GM12878 (cell line): ENCODE measurements at regions of chr2 and their contacts with region 1.

Region 1: GRCh38 chr2:25276569-25277465 is 64.9 kb downstream of the DNMT3A start:
- DNase-seq: no peak
- ATAC-seq: peak; percentile 41
- H3K4me3 ChIP-seq: peak overlapping the region; percentile 45; the same call in 1 of the 2 replicates
- H3K27ac ChIP-seq: peak overlapping the region; percentile 77
- H3K4me1 ChIP-seq: peaks cover 86% of the 10 kb centered on the region
- H3K27me3 ChIP-seq: no peaks in the 10 kb centered on the region
- CTCF ChIP-seq: peak; percentile 75 to 89 (median 80)
- EP300 ChIP-seq: 0 out of 4 replicates have a peak, but pooled peaks of 1 of the 2 experiments have one; percentile 34
- POLR2A ChIP-seq: peak; percentile 54; the same call in 1 of the 2 replicates
- RAD21 ChIP-seq: peak; percentile 58; the same call in 1 of the 2 replicates

Region 2: DNA sequence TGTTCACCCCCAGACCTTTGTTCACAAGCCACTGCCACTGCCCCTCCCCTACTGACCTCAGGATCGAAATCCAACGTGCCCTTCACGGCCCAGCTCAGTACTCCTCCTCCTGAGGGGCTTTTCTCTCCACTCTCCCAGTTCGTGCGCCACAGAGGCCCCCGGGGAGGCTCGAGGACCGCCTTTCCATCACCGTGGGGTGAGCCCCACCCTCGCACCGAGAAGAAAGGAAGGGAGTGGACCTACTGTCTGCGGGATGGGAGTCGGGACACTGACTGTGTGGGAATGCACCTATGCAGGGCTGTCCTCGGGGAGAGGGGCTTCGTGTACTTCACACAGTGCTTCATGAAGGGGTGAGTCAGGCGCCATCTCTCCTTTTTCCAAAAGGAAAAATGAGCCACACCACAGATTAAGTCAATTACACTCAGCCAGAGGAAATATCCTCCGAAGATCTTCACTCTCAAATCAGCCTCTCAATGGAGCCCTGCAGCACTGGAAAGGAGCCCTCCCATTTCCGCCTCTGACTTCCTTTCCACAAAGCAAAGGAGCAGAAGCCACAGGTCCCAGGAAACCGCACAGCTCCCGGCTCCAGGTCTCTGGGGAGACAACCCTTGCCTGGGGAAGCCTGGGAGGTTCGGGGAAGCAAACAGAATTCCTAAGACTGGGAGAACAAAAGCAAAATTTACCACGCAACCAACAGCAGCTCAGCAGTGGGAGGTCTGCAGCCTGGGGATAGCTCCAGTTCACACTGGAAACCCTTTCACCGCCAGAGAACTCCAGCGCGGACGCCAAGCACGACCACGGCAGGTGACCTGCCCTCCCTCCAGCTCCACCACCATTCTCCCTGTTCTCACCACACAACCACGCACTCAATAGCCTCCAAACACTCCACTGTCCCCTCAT is 378.4 kb before region 1 on chr2:
- CTCF ChIA-PET with region 1: no interaction called
- POLR2A ChIA-PET with region 1: no interaction called
- RAD21 ChIA-PET with region 1: no interaction called
- SMC1A ChIA-PET with region 1: no interaction called
- in situ Hi-C with region 1: no loop called
- intact Hi-C with region 1: no loop called
- DNase-seq: no peak
- ATAC-seq: no peak
- H3K4me3 ChIP-seq: no peak overlapping the region
- H3K27ac ChIP-seq: no peak overlapping the region
- H3K4me1 ChIP-seq: no peaks in the 10 kb centered on the region
- H3K27me3 ChIP-seq: no peaks in the 10 kb centered on the region
- CTCF ChIP-seq: no peak
- EP300 ChIP-seq: no peak
- POLR2A ChIP-seq: no peak
- RAD21 ChIP-seq: no peak

Region 3: GRCh38 chr2:25151718-25152117 is 125.1 kb before region 1 on chr2:
- CTCF ChIA-PET with region 1: no interaction called
- POLR2A ChIA-PET with region 1: no interaction called
- RAD21 ChIA-PET with region 1: no interaction called
- SMC1A ChIA-PET with region 1: no interaction called
- in situ Hi-C with region 1: no loop called
- intact Hi-C with region 1: no loop called
- DNase-seq: no peak
- ATAC-seq: no peak
- H3K4me3 ChIP-seq: no peak overlapping the region
- H3K27ac ChIP-seq: no peak overlapping the region
- H3K4me1 ChIP-seq: no peaks in the 10 kb centered on the region
- H3K27me3 ChIP-seq: no peaks in the 10 kb centered on the region; a peak in 2 of 4 replicates
- CTCF ChIP-seq: no peak
- EP300 ChIP-seq: no peak
- POLR2A ChIP-seq: no peak
- RAD21 ChIP-seq: no peak

Region 4: GRCh38 chr2:25228848-25229278 is 48.0 kb before region 1 on chr2:
- CTCF ChIA-PET with region 1: interaction called, 14 read pairs
- POLR2A ChIA-PET with region 1: interaction called, 3 read pairs
- RAD21 ChIA-PET with region 1: interaction called, 5 read pairs
- SMC1A ChIA-PET with region 1: interaction called, 5 read pairs
- in situ Hi-C with region 1: no loop called
- intact Hi-C with region 1: no loop called
- DNase-seq: no peak
- ATAC-seq: peak; percentile 64
- H3K4me3 ChIP-seq: no peak overlapping the region
- H3K27ac ChIP-seq: no peak overlapping the region
- H3K4me1 ChIP-seq: peaks cover 29% of the 10 kb centered on the region
- H3K27me3 ChIP-seq: no peaks in the 10 kb centered on the region
- CTCF ChIP-seq: peak; percentile 60 to 82 (median 63)
- EP300 ChIP-seq: no peak
- POLR2A ChIP-seq: no peak
- RAD21 ChIP-seq: peak; percentile 55

Region 5: DNA sequence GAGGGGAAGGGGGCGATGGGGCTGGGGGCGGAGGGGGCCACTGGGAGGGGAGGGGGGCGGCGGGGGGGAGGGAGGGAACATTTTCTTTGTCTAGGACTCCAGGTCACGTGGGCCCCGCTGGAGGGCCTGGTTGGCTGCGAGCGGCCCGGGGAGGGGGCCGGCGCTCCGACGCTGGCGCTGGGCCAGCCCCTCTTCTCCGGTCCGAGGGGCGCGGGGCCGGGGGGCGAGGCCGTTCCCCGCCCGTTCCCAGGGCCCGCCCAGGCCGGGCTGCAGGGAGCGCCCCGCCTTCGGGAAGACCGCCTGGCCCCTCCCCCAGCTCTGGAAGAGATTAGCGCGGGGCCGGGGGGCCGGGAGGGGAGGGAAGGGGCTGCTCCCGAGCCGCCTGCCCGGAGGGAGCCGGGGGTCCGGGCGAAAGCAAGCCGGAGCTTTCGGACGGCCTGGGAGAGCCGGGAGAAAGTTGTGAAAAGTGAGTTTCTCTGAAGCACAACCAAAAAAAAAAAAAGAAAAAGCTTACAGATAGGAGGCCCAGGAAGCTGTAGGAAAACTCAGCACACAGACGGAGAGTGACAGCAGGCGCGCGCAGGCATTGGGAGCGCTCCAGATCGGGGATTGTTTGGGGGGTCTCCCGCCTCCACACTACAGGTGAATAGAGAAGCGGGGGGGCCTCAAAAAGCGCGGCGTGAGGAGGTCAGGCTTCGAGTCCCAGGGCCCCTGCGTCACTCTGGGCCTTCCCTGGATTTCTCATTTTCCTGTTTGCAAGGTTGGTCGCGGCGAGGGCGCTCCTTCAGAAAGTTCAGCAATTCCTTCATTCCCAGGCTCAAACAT is 24.3 kb before region 1 on chr2:
- CTCF ChIA-PET with region 1: interaction called, 14 read pairs
- POLR2A ChIA-PET with region 1: interaction called, 7 read pairs
- RAD21 ChIA-PET with region 1: interaction called, 15 read pairs
- SMC1A ChIA-PET with region 1: interaction called, 11 read pairs
- in situ Hi-C with region 1: no loop called
- intact Hi-C with region 1: no loop called
- DNase-seq: no peak
- ATAC-seq: peak; percentile 81
- H3K4me3 ChIP-seq: peak overlapping the region; percentile 82
- H3K27ac ChIP-seq: peak overlapping the region; percentile 25; the same call in 1 of the 2 replicates
- H3K4me1 ChIP-seq: peaks cover 11% of the 10 kb centered on the region
- H3K27me3 ChIP-seq: no peaks in the 10 kb centered on the region
- CTCF ChIP-seq: no peak
- EP300 ChIP-seq: no peak
- POLR2A ChIP-seq: no peak
- RAD21 ChIP-seq: no peak

Region 6: DNA sequence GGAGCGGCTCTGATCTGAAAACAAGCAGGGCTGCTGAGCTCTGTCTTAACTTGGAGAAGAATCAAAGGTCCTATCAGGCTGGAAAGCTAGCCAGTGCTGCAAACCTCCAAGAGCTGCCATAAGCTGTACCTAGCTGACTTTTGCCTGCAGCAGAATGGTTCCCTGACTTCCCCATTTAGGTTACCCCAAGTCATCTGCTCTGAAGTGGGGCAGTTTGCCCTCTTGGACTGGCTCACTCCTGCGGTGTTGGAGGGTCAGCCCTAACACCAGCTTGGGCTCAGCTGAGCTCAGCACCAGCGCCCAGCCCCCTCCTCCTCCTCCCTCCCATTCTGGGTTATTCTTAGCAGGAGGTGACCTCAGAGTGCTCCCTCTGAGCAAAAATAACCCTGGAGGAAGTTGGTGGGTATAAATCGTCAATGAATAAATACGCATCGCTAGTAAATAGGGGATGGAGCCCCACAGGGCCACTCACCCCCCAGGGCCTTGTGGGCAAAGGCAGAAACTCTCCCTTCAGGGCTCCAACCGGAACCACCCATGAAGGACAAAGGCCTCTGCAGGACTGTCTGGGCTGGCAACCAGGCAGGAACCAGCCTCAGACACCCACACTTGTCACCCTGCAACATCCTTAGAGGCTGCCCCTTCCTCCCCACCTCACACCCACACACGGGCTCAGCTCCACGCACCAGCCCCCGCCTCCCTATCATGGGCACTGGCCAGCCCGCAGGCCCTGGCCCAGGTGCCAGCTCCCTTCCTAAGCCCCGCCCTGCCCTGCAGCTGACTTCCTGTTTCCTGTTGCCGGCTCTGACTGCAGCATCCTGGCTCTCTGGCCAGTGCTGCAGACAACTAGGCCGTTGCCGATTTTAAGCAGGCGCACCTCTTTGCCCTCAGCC is 18.0 kb after region 1 on chr2:
- CTCF ChIA-PET with region 1: interaction called, 30 read pairs
- POLR2A ChIA-PET with region 1: interaction called, 12 read pairs
- RAD21 ChIA-PET with region 1: interaction called, 17 read pairs
- SMC1A ChIA-PET with region 1: interaction called, 24 read pairs
- in situ Hi-C with region 1: no loop called
- intact Hi-C with region 1: loop called (anchors 2 kb)
- DNase-seq: no peak
- ATAC-seq: peak; percentile 97
- H3K4me3 ChIP-seq: peak overlapping the region; percentile 24; the same call in 1 of the 2 replicates
- H3K27ac ChIP-seq: peak overlapping the region; percentile 81
- H3K4me1 ChIP-seq: peaks cover 35% of the 10 kb centered on the region
- H3K27me3 ChIP-seq: no peaks in the 10 kb centered on the region
- CTCF ChIP-seq: no peak
- EP300 ChIP-seq: no peak
- POLR2A ChIP-seq: peak; percentile 82
- RAD21 ChIP-seq: peak; percentile 4; the same call in 1 of the 2 replicates

Region 7: GRCh38 chr2:25301453-25302352 is 24.9 kb after region 1 on chr2:
- CTCF ChIA-PET with region 1: interaction called, 59 read pairs
- POLR2A ChIA-PET with region 1: interaction called, 7 read pairs
- RAD21 ChIA-PET with region 1: interaction called, 41 read pairs
- SMC1A ChIA-PET with region 1: interaction called, 35 read pairs
- in situ Hi-C with region 1: no loop called
- intact Hi-C with region 1: loop called (anchors 2 kb)
- DNase-seq: peak; percentile 95
- ATAC-seq: peak; percentile 95
- H3K4me3 ChIP-seq: peak overlapping the region; percentile 43
- H3K27ac ChIP-seq: peak overlapping the region; percentile 54
- H3K4me1 ChIP-seq: peaks cover 36% of the 10 kb centered on the region
- H3K27me3 ChIP-seq: no peaks in the 10 kb centered on the region
- CTCF ChIP-seq: no peak
- EP300 ChIP-seq: peak; percentile 89 to 92
- POLR2A ChIP-seq: peak; percentile 46; the same call in 1 of the 2 replicates
- RAD21 ChIP-seq: no peak

Region 8: GRCh38 chr2:25309402-25309801 is 32.6 kb after region 1 on chr2:
- CTCF ChIA-PET with region 1: interaction called, 59 read pairs
- POLR2A ChIA-PET with region 1: interaction called, 4 read pairs
- RAD21 ChIA-PET with region 1: interaction called, 7 read pairs
- SMC1A ChIA-PET with region 1: interaction called, 35 read pairs
- in situ Hi-C with region 1: no loop called
- intact Hi-C with region 1: no loop called
- DNase-seq: no peak
- ATAC-seq: peak; percentile 72
- H3K4me3 ChIP-seq: no peak overlapping the region
- H3K27ac ChIP-seq: no peak overlapping the region
- H3K4me1 ChIP-seq: peaks cover 8% of the 10 kb centered on the region
- H3K27me3 ChIP-seq: no peaks in the 10 kb centered on the region
- CTCF ChIP-seq: peak; percentile 49 to 63 (median 52)
- EP300 ChIP-seq: no peak
- POLR2A ChIP-seq: no peak
- RAD21 ChIP-seq: peak; percentile 59

Region 9: DNA sequence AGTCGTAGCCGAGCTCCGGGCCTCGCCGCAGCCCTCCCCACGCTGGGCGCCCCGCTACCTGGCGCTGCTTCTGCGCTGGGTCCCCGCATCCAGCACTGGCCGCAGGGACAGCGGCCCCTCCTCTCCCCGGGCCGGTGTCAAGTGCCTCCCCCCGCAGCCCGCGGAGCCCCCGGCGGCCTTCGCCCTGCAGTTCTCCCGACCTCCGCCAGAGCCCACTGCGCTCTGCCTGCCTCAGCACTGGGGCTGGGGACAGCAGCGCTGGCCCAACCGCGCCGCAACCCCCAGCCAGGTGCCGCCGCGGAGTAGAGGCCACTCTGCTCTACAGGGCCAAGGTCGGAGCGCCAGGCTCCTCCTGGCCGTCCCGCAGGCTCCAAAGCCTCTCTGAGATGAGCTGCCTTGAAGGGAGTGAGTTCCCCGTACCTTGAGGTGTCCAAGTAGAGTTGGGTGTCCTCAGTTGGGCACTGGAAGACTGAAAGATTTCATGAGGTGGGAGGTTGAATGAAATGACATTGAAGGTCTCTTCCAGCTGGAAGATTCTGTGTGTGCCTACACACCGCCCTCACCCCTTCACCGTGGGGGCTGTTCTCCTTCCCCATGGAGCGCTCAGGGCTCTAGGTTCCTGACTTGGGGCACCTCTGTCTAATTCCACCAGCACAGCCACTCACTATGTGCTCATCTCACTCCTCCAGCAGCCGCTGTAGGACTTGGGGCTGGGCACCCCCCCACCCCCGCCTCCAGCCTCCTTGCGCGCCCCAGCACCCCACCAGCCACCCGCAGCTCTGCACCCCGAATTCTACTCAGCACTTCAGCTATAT is 65.8 kb after region 1 on chr2:
- CTCF ChIA-PET with region 1: interaction called, 5 read pairs
- POLR2A ChIA-PET with region 1: no interaction called
- RAD21 ChIA-PET with region 1: interaction called, 5 read pairs
- SMC1A ChIA-PET with region 1: interaction called, 7 read pairs
- in situ Hi-C with region 1: no loop called
- intact Hi-C with region 1: loop called (anchors 1 kb)
- DNase-seq: no peak
- ATAC-seq: peak; percentile 94
- H3K4me3 ChIP-seq: peak overlapping the region; percentile 76; the same call in 1 of the 2 replicates
- H3K27ac ChIP-seq: peak overlapping the region; percentile 52
- H3K4me1 ChIP-seq: peaks cover 12% of the 10 kb centered on the region
- H3K27me3 ChIP-seq: no peaks in the 10 kb centered on the region; a peak in 1 of 4 replicates
- CTCF ChIP-seq: peak; percentile 93 to 99 (median 97)
- EP300 ChIP-seq: no peak
- POLR2A ChIP-seq: peak; percentile 50; the same call in 1 of the 2 replicates
- RAD21 ChIP-seq: peak; percentile 90